IMR-90 (cell line): ENCODE measurements at regions of chr20 and their contacts with region 1.

Region 1: GRCh38 chr20:9514461-9515213 is at the start of gene LAMP5:
- DNase-seq: peak; percentile 29
- ATAC-seq: peak; percentile 92
- H3K4me3 ChIP-seq: no peak within 1 kb of the TSS
- H3K27ac ChIP-seq: no peak within 1 kb of the TSS
- H3K4me1 ChIP-seq: no peaks in the 10 kb centered on the region; the same call in 1 of the 2 replicates
- H3K27me3 ChIP-seq: peaks cover 61% of the 10 kb centered on the region
- CTCF ChIP-seq: no peak
- POLR2A ChIP-seq: no peak
- RAD21 ChIP-seq: no peak
- total RNA-seq, gene LAMP5: under 0.01 TPM in 1 of 2 replicates, not detected in the other

Region 2: DNA sequence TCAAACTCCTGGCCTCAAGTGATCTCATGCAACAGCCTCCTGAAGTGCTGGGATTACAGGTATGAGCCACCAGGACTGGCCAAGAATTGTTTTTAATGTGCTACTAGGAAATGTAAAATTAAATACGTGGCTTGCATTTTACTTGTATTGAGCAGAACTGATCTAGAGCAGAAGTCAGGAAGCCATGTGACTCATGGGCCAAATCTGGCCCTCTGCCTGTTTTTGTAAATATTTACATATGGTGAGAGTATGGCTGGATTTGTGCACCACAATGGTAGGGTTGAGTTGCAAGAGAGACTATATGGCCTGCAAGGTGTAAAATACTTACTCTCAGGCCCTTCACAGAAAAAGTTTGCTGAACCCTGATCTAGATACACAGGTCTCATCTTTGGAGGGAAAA is 75.6 kb after region 1 on chr20:
- CTCF ChIA-PET with region 1: no interaction called
- POLR2A ChIA-PET with region 1: no interaction called
- dilution Hi-C with region 1: no loop called
- in situ Hi-C with region 1: no loop called
- intact Hi-C with region 1: loop called (anchors 5 kb)
- DNase-seq: peak; percentile 77
- ATAC-seq: peak; percentile 82
- H3K4me3 ChIP-seq: no peak overlapping the region
- H3K27ac ChIP-seq: no peak overlapping the region
- H3K4me1 ChIP-seq: no peaks in the 10 kb centered on the region
- H3K27me3 ChIP-seq: peaks cover 1% of the 10 kb centered on the region; the same call in 1 of the 2 replicates
- CTCF ChIP-seq: no peak
- POLR2A ChIP-seq: no peak
- RAD21 ChIP-seq: no peak